Activated naive CD4-positive, alpha-beta T cell treated with anti-CD3 and anti-CD28 coated beads for 36 hours (primary cell): ENCODE measurements at regions of chr2 and their contacts with region 1.

Region 1: GRCh38 chr2:176638167-176639015 is 369.1 kb downstream of the MTX2 start:
- DNase-seq: peak; percentile 69
- H3K4me3 Mint-ChIP-seq: peak overlapping the region; percentile 62
- H3K27ac Mint-ChIP-seq: no peak overlapping the region
- H3K4me1 Mint-ChIP-seq: peaks cover 2% of the 10 kb centered on the region
- H3K27me3 Mint-ChIP-seq: peaks cover 52% of the 10 kb centered on the region

Region 2: DNA sequence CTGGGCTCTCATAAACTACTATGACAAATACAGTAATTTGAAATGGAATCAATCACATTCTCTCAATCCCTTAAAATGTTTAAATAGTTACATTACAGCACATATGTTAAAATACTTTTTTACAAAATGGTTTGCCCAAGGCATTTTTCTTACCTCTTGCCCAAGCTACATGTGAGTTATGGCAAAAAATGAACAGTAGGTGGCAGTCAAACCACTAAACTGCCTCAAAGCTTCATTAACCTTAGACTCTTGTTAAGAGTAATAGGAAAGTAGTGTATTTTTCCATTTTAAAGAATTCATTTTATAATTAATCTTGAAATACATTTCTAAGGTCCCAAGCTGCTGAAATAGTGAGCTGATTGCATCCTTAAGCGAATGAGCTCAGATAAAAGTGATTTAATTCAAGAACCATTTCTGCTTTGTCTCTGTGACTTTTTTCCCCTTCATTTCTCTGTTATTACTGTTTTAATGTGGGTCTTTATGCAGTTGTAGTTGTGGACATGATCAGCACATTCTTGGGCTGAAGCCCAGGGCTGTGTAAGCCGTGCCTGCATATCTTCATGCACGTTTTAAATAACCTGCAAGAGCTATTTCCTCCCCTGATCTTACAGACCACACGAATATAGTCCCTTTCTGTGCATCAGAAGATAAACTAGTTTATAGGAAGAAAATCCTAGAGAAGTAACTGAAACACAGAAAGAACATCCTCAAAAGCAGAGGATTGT is 948.1 kb before region 1 on chr2:
- CTCF ChIA-PET with region 1: no interaction called
- intact Hi-C with region 1: loop called (anchors 5 kb)
- DNase-seq: peak; percentile 56
- H3K4me3 Mint-ChIP-seq: no peak overlapping the region
- H3K27ac Mint-ChIP-seq: no peak overlapping the region
- H3K4me1 Mint-ChIP-seq: no peaks in the 10 kb centered on the region
- H3K27me3 Mint-ChIP-seq: peaks cover 26% of the 10 kb centered on the region

Region 3: DNA sequence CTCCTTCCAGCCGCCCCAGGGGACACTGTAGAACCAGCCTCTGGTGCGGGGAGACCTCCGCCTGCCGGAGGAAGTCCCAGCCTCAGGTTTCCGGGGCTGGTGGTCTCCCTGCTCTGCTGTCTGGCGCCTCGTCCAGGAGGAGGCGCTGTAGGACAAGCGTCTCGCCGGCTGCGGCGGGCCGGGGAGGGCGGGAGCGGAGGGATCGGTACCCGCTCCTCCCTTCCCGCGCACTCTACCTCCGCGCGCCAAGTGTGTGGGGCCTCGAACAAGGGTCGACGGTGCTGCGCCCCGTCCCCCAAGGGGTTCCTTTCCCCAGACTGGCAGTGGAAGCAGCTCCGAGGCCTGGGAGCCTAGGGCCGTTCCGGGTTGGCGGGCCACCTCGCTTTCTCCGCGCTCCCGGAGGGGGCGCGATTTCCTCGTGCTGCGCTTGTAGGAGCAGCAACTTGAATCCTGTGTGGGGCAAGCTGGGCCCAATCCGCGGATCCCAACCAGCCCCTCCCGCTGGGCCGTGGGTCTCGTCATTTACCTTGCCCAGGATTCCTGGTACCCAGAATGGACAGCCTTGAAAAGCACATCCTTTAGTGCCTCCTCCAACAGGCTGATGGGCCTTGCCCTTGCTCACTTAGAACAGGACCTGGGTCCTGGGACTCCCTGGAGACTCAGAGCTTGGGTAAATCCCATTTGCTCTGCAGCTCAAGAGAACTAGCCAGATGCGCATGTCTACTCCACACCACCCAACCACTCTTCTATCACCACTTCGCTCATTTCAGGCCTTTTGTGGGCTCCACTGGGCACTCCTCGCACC is 497.7 kb before region 1 on chr2:
- CTCF ChIA-PET with region 1: interaction called, 8 read pairs
- intact Hi-C with region 1: loop called (anchors 1 kb)
- DNase-seq: peak; percentile 74
- H3K4me3 Mint-ChIP-seq: peak overlapping the region; percentile 42
- H3K27ac Mint-ChIP-seq: no peak overlapping the region
- H3K4me1 Mint-ChIP-seq: peaks cover 21% of the 10 kb centered on the region
- H3K27me3 Mint-ChIP-seq: peaks cover 83% of the 10 kb centered on the region

Region 4: GRCh38 chr2:176454893-176455811 is 183.2 kb before region 1 on chr2:
- CTCF ChIA-PET with region 1: interaction called, 5 read pairs
- intact Hi-C with region 1: loop called (anchors 1 kb)
- DNase-seq: peak; percentile 92
- H3K4me3 Mint-ChIP-seq: no peak overlapping the region
- H3K27ac Mint-ChIP-seq: no peak overlapping the region
- H3K4me1 Mint-ChIP-seq: peaks cover 2% of the 10 kb centered on the region
- H3K27me3 Mint-ChIP-seq: peaks cover 37% of the 10 kb centered on the region

Region 5: DNA sequence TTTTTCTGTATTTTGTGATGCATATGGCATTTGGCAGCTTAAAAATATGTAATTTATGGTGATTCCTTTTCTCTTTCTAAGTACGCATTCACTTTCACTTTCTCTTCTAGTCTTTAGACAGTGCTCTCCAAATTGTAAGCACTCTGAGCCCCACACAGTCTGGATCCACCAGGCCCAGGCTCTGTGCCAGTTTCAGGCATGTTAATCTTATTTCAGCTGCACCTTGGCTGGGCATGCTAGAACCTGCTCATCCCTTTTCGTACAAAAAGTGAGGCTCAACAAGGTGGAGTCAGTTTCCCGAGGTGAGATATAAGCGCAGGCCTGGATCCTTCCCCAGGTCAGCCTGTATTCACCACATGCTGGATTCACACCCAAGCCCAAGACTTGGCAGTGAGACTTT is 165.2 kb before region 1 on chr2:
- CTCF ChIA-PET with region 1: no interaction called
- intact Hi-C with region 1: loop called (anchors 5 kb)
- DNase-seq: peak; percentile 38
- H3K4me3 Mint-ChIP-seq: peak overlapping the region; percentile 56
- H3K27ac Mint-ChIP-seq: peak overlapping the region; percentile 25
- H3K4me1 Mint-ChIP-seq: peaks cover 13% of the 10 kb centered on the region
- H3K27me3 Mint-ChIP-seq: no peaks in the 10 kb centered on the region

Region 6: DNA sequence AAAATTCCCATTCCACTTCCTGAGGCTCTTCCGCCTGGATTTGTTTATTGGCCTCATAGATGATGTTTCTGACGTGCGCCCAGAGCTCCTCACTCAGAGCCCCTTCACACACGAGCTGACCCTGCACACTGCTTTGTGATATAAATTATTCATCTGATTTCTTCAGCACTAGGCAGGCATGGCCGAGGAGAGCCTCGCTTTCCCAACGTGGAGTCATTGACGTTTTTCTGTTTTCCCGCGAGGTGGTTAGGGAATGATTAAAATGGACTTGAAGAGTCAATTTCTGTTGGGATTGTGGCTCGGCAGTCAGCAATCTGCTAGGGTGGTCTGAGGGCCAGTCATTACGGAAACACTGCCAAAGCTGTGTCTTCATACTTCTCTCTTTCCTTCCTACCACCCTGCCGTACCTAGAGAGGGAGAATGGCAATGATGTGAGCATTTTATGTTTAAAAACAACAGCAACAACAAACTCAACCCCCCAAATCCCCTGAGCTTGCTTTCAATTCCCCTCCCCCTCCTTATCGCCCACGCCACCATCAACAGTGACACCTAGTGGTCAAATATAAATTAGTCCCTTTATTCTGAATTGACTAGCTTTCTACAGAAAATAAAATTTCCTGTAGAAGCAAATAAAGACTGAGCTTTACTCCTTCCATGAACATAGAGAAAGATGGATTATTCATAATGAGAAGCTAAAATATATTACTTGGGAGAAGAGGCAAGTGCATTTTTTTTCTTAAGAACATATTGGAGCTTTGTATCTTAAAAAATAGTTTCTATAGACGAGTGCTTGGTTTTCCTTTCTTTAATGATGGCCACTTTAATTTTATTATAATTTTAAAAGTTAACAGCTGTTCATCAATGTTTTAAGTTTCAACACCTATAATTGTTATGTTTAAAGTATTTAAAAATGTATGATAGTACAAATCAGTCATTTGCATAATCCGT is 84.0 kb before region 1 on chr2:
- CTCF ChIA-PET with region 1: interaction called, 7 read pairs
- intact Hi-C with region 1: loop called (anchors 2 kb)
- DNase-seq: peak; percentile 45
- H3K4me3 Mint-ChIP-seq: peak overlapping the region; percentile 72
- H3K27ac Mint-ChIP-seq: no peak overlapping the region
- H3K4me1 Mint-ChIP-seq: peaks cover 12% of the 10 kb centered on the region
- H3K27me3 Mint-ChIP-seq: peaks cover 39% of the 10 kb centered on the region

Region 7: GRCh38 chr2:176653479-176654443 is 15.4 kb after region 1 on chr2:
- CTCF ChIA-PET with region 1: interaction called, 13 read pairs
- intact Hi-C with region 1: no loop called
- DNase-seq: peak; percentile 59
- H3K4me3 Mint-ChIP-seq: no peak overlapping the region
- H3K27ac Mint-ChIP-seq: no peak overlapping the region
- H3K4me1 Mint-ChIP-seq: peaks cover 4% of the 10 kb centered on the region
- H3K27me3 Mint-ChIP-seq: peaks cover 32% of the 10 kb centered on the region